Left ventricle myocardium superior (tissue), 1 donor: ENCODE measurements at regions of chr5 and their contacts with region 1.

Region 1: GRCh38 chr5:64229163-64229774 is 63.6 kb downstream of the RNF180 start:
- DNase-seq: no peak
- ATAC-seq: no peak

Region 2: GRCh38 chr5:64451551-64451950 is 222.3 kb after region 1 on chr5:
- intact Hi-C with region 1: no loop called
- DNase-seq: no peak
- ATAC-seq: no peak

Region 3: DNA sequence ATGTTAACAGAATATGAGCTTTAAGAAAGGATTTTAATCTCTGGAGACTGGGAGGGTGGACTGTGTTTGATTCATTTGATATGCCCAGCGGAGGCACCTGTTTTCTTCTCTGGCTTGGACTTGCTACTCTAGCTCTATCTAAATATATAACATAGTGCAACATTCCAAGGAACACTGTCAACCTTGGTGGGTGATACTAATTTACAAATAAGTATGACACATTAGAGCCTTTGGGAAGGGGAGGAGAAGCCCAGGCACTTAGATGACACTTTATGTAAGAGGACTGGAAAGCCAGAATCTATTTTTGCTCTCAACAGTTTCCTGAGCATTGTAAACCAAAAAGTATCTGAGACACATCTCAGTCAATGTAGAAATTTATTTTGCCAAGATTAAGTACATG is 377.7 kb after region 1 on chr5:
- intact Hi-C with region 1: loop called (anchors 5 kb)
- DNase-seq: no peak
- ATAC-seq: no peak

Region 4: GRCh38 chr5:64773533-64773932 is 544.3 kb after region 1 on chr5:
- intact Hi-C with region 1: loop called (anchors 10 kb)
- DNase-seq: no peak
- ATAC-seq: no peak